Caco-2 (cell line): ENCODE measurements at regions of chr4 and their contacts with region 1.

Region 1: DNA sequence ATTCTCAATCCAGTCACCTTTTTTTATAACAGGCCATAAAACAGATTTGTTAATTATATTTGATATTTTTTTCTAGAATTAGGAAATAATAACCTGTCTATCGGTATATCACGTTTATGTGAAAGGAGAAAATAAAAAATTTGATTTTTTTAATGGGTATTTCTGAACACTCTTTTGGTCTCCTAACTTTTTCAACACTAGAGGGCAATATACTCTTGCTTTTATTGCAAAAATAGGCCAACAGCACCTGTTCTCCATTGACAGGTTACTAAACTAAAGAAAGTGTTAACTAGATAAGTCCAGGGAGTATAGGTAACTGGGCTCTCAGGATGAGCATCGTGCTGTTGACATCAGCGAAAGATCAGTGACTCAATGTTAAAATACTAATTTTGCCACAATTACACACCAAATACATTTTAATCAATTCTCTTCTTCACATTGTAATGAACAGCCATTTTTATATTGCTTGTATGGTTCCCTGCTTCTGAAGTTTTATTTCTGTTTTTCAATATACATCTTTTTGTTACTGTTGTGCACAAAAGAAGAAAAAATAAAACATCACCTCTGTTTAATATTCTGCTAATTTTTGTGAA is 22.8 kb downstream of the NDST4 start:
- DNase-seq: peak in 1 of 2 experiments; percentile 20
- H3K4me3 ChIP-seq: no peak overlapping the region
- H3K4me3 Mint-ChIP-seq: no peak overlapping the region
- H3K27ac Mint-ChIP-seq: no peak overlapping the region
- H3K4me1 ChIP-seq: no peaks in the 10 kb centered on the region
- H3K4me1 Mint-ChIP-seq: no peaks in the 10 kb centered on the region
- H3K27me3 ChIP-seq: no peaks in the 10 kb centered on the region
- H3K27me3 Mint-ChIP-seq: peaks cover 3% of the 10 kb centered on the region
- CTCF ChIP-seq: peak; percentile 43 to 57

Region 2: DNA sequence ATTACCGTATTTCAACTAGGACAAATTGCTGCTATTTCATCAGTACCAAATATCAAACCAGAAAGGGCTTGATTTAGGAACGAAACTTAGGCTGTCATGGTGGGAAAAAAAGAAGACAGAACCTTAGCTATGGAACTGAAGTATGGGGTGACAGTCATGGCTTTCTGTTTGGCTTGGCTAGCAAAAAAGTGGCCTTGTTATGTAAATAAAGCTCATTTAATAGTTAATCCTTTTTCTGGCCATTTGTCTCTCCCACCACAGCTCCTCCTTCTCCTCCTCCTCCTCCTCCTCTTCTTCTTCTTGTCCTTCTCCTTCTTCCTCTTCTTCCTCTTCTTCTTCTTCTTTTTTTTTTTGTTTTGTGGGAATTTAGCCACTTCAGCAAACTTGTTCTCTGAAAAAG is 457.5 kb after region 1 on chr4:
- CTCF ChIA-PET with region 1: no interaction called
- POLR2A ChIA-PET with region 1: no interaction called
- intact Hi-C with region 1: loop called (anchors 10 kb)
- DNase-seq: no peak
- H3K4me3 ChIP-seq: no peak overlapping the region
- H3K4me3 Mint-ChIP-seq: no peak overlapping the region
- H3K27ac Mint-ChIP-seq: no peak overlapping the region
- H3K4me1 ChIP-seq: no peaks in the 10 kb centered on the region
- H3K4me1 Mint-ChIP-seq: no peaks in the 10 kb centered on the region
- H3K27me3 ChIP-seq: no peaks in the 10 kb centered on the region; the same call in 1 of the 2 replicates
- H3K27me3 Mint-ChIP-seq: no peaks in the 10 kb centered on the region
- CTCF ChIP-seq: no peak

Region 3: GRCh38 chr4:115790812-115791211 is 700.2 kb after region 1 on chr4:
- CTCF ChIA-PET with region 1: no interaction called
- POLR2A ChIA-PET with region 1: no interaction called
- intact Hi-C with region 1: loop called (anchors 10 kb)
- DNase-seq: no peak
- H3K4me3 ChIP-seq: no peak overlapping the region
- H3K4me3 Mint-ChIP-seq: no peak overlapping the region
- H3K27ac Mint-ChIP-seq: no peak overlapping the region
- H3K4me1 ChIP-seq: no peaks in the 10 kb centered on the region
- H3K4me1 Mint-ChIP-seq: no peaks in the 10 kb centered on the region
- H3K27me3 ChIP-seq: no peaks in the 10 kb centered on the region
- H3K27me3 Mint-ChIP-seq: no peaks in the 10 kb centered on the region
- CTCF ChIP-seq: peak in 1 of 2 experiments; percentile 14